Common myeloid progenitor, CD34-positive (primary cell): ENCODE measurements at regions of chr19 and their contacts with region 1.

Region 1: GRCh38 chr19:10565567-10566407 is at the start of gene KRI1:
- DNase-seq: peak; percentile 97 to 99 (median 98)
- H3K4me3 ChIP-seq: peak within 1 kb of the TSS; percentile 76 to 93 (median 88)
- H3K27ac ChIP-seq: peak within 1 kb of the TSS; percentile 46 to 78
- H3K4me1 ChIP-seq: peaks cover 16 to 49% (median 46%) of the 10 kb centered on the region in 4 experiments
- H3K27me3 ChIP-seq: no peaks in the 10 kb centered on the region

Region 2: GRCh38 chr19:10543420-10544241 is 22.2 kb before region 1 on chr19 and contains the start of gene ATG4D:
- CTCF ChIA-PET with region 1: interaction called, 34 read pairs
- POLR2A ChIA-PET with region 1: interaction called, 10 read pairs
- DNase-seq: peak; percentile 91 to 96 (median 92)
- H3K4me3 ChIP-seq: peak within 1 kb of the TSS; percentile 76 to 95 (median 88)
- H3K27ac ChIP-seq: peak within 1 kb of the TSS; percentile 61 to 84
- H3K4me1 ChIP-seq: peaks cover 0 to 32% (median 28%) of the 10 kb centered on the region in 4 experiments
- H3K27me3 ChIP-seq: no peaks in the 10 kb centered on the region

Region 3: GRCh38 chr19:10551698-10552301 is 14.0 kb before region 1 on chr19:
- CTCF ChIA-PET with region 1: interaction called, 64 read pairs
- POLR2A ChIA-PET with region 1: interaction called, 29 read pairs
- DNase-seq: peak; percentile 61 to 76 (median 74)
- H3K4me3 ChIP-seq: peak overlapping the region in 1 of 7 experiments; percentile 42
- H3K27ac ChIP-seq: no peak overlapping the region
- H3K4me1 ChIP-seq: peaks cover 3 to 61% (median 58%) of the 10 kb centered on the region in 4 experiments
- H3K27me3 ChIP-seq: no peaks in the 10 kb centered on the region

Region 4: DNA sequence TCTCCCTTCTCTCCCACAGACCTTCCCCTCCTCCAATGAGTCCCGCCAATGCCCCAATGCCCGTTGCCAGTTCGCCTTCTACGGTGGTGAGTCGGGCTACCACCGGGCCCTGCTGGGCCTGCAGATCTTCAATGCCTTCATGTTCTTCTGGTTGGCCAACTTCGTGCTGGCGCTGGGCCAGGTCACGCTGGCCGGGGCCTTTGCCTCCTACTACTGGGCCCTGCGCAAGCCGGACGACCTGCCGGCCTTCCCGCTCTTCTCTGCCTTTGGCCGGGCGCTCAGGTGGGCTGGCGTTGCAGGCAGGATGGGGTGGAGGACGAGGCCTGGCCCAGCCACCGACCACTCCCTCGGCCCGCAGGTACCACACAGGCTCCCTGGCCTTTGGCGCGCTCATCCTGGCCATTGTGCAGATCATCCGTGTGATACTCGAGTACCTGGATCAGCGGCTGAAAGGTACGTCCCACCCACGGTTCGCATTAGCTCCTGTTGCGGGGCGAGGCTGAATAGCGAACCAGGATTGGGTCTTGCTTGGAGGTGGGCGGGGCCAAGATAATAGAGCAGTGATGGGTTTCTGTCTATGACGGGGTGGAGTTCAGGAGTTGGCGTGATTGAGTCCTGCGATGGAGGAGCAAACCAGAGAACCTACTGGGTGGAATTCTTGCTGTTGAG is 70.7 kb after region 1 on chr19:
- CTCF ChIA-PET with region 1: no interaction called
- POLR2A ChIA-PET with region 1: no interaction called
- DNase-seq: no peak
- H3K4me3 ChIP-seq: no peak overlapping the region
- H3K27ac ChIP-seq: no peak overlapping the region
- H3K4me1 ChIP-seq: peaks cover 0 to 8% (median 0%) of the 10 kb centered on the region in 4 experiments
- H3K27me3 ChIP-seq: no peaks in the 10 kb centered on the region

Region 5: DNA sequence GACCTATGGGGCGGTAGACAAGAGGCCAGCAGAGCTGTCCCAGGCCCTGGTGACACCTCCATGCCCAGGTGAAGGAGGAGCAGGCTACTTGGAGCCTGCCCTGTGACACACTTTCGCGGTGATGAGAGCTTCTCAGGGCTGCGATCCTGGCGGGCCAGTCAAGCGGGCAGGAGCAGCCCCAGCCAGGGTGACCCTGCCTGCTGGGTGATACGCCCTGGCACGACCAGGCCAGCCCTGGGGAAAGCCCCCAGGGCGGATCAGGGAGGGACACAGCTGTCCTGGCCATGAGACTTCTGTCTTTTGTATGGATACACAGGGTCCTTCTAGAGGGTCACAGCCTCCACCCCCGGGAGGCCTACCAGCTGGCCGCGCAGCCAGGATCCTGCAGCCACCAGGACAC is 165.1 kb after region 1 on chr19:
- CTCF ChIA-PET with region 1: no interaction called
- POLR2A ChIA-PET with region 1: no interaction called
- DNase-seq: peak in 1 of 3 donors; percentile 17
- H3K4me3 ChIP-seq: no peak overlapping the region
- H3K27ac ChIP-seq: peak overlapping the region in 1 of 2 experiments; percentile 34
- H3K4me1 ChIP-seq: peaks cover 0 to 26% (median 19%) of the 10 kb centered on the region in 4 experiments
- H3K27me3 ChIP-seq: no peaks in the 10 kb centered on the region